Keratinocyte (primary cell): ENCODE measurements at regions of chr10 and their contacts with region 1.

Region 1: GRCh38 chr10:35642027-35642792 is at the start of gene FZD8:
- DNase-seq: no peak
- H3K4me3 ChIP-seq: peak within 1 kb of the TSS; percentile 65 to 81 (median 78)
- H3K27ac ChIP-seq: no peak within 1 kb of the TSS
- H3K4me1 ChIP-seq: peaks cover 16% of the 10 kb centered on the region
- H3K27me3 ChIP-seq: peaks cover 5% of the 10 kb centered on the region
- CTCF ChIP-seq: peak in 1 of 3 experiments; percentile 2
- polyA plus RNA-seq, gene FZD8: 1.5 to 2.1 TPM (median 2.0 TPM) in 3 replicates

Region 2: GRCh38 chr10:35735412-35735811 is 93.2 kb after region 1 on chr10:
- dilution Hi-C with region 1: no loop called
- DNase-seq: no peak
- H3K4me3 ChIP-seq: no peak overlapping the region
- H3K27ac ChIP-seq: no peak overlapping the region
- H3K4me1 ChIP-seq: peaks cover 4% of the 10 kb centered on the region
- H3K27me3 ChIP-seq: no peaks in the 10 kb centered on the region
- CTCF ChIP-seq: no peak

Region 3: DNA sequence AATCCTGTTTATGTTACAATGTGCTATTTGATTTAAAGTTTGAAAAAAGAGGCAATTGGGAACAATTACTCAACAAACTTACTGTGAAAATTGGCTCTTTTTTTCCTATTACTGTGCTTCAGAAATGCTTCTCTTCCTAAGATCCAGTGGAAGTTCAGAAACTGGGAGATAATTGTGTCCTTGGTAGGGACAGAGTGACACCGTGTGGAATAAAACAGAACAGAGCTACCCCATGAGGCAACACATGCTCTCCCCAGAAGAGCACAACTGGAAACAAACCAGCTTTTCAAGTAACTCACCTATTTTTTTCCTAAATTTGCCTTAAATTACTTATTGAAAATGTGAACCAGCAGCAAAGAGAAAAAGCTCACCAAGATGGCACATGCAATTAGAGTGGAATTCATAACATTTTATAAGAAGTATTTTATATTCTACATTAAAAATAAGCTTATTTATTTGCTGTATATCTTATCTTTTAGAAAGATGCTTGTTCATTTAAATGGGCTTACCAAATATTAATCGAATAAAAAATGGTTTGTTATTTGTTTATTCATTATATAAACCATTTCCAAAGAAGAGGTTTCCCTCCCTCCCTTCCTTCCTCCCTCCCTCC is 1137.1 kb after region 1 on chr10:
- dilution Hi-C with region 1: loop called (anchors 25 kb)
- DNase-seq: peak; percentile 19
- H3K4me3 ChIP-seq: no peak overlapping the region
- H3K27ac ChIP-seq: no peak overlapping the region
- H3K4me1 ChIP-seq: no peaks in the 10 kb centered on the region
- H3K27me3 ChIP-seq: no peaks in the 10 kb centered on the region
- CTCF ChIP-seq: peak; percentile 59 to 78 (median 67)